HepG2 (cell line): ENCODE measurements at regions of chr15 and their contacts with region 1.

Region 1: GRCh38 chr15:94670438-94671034 is 439.2 kb downstream of the MCTP2 start:
- DNase-seq: peak; percentile 39
- ATAC-seq: no peak
- H3K4me3 ChIP-seq: no peak overlapping the region
- H3K27ac ChIP-seq: no peak overlapping the region
- H3K4me1 ChIP-seq: no peaks in the 10 kb centered on the region
- H3K27me3 ChIP-seq: peaks cover 0 to 4% of the 10 kb centered on the region in 2 experiments; a peak in 2 of 5 replicates
- CTCF ChIP-seq: peak; percentile 69
- EP300 ChIP-seq: no peak
- POLR2A ChIP-seq: no peak
- RAD21 ChIP-seq: 0 out of 2 replicates have a peak, but pooled peaks have one; percentile 15

Region 2: DNA sequence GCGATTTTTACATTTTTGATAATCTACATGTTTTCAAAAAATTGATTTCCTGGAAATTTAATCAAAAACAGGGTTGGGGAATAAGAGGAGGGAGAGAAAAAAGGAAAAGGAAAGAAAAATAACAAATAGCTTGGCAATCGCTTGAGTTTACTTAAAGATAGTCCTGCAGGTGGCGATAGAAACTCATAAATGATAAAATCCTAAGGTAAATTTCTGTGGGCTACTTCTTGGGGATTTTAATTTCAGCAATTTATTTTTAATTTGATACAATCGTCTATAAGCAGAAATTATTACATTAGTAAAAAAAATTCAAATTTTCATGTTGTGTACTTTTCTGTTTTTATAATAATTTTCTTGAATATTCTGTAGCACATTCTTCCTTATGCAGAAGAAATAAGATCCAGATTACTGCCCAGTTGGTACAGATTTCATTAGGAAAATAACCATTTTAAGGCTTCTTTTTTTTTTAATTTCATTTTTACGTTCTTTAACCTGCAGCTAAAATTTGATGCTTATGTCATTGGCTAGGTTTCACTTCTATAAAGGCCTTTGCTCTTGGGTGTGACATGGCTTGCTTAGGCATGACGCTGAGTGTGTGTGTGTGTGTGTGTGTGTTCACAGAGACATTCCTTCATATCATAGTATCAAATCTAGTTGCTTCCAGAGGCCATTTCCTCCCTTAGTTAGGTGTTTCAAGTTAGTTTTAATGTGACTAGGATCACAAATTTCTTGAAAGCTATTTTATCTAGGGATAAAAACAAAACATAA is 257.4 kb before region 1 on chr15:
- CTCF ChIA-PET with region 1: no interaction called
- POLR2A ChIA-PET with region 1: no interaction called
- in situ Hi-C with region 1: no loop called
- intact Hi-C with region 1: loop called (anchors 5 kb)
- DNase-seq: peak; percentile 22
- ATAC-seq: no peak
- H3K4me3 ChIP-seq: no peak overlapping the region
- H3K27ac ChIP-seq: no peak overlapping the region
- H3K4me1 ChIP-seq: no peaks in the 10 kb centered on the region
- H3K27me3 ChIP-seq: no peaks in the 10 kb centered on the region
- CTCF ChIP-seq: peak; percentile 31; the same call in 1 of the 2 replicates
- EP300 ChIP-seq: no peak
- POLR2A ChIP-seq: no peak
- RAD21 ChIP-seq: no peak

Region 3: GRCh38 chr15:94722024-94722636 is 51.6 kb after region 1 on chr15:
- CTCF ChIA-PET with region 1: no interaction called
- POLR2A ChIA-PET with region 1: no interaction called
- in situ Hi-C with region 1: no loop called
- intact Hi-C with region 1: no loop called
- DNase-seq: no peak
- ATAC-seq: no peak
- H3K4me3 ChIP-seq: no peak overlapping the region
- H3K27ac ChIP-seq: no peak overlapping the region
- H3K4me1 ChIP-seq: no peaks in the 10 kb centered on the region
- H3K27me3 ChIP-seq: no peaks in the 10 kb centered on the region
- CTCF ChIP-seq: no peak
- EP300 ChIP-seq: no peak
- POLR2A ChIP-seq: no peak
- RAD21 ChIP-seq: no peak

Region 4: GRCh38 chr15:94951538-94951937 is 281.0 kb after region 1 on chr15:
- CTCF ChIA-PET with region 1: no interaction called
- POLR2A ChIA-PET with region 1: no interaction called
- in situ Hi-C with region 1: no loop called
- intact Hi-C with region 1: no loop called
- DNase-seq: no peak
- ATAC-seq: no peak
- H3K4me3 ChIP-seq: no peak overlapping the region
- H3K27ac ChIP-seq: no peak overlapping the region
- H3K4me1 ChIP-seq: no peaks in the 10 kb centered on the region
- H3K27me3 ChIP-seq: no peaks in the 10 kb centered on the region
- CTCF ChIP-seq: no peak
- EP300 ChIP-seq: no peak
- POLR2A ChIP-seq: no peak
- RAD21 ChIP-seq: no peak

Region 5: DNA sequence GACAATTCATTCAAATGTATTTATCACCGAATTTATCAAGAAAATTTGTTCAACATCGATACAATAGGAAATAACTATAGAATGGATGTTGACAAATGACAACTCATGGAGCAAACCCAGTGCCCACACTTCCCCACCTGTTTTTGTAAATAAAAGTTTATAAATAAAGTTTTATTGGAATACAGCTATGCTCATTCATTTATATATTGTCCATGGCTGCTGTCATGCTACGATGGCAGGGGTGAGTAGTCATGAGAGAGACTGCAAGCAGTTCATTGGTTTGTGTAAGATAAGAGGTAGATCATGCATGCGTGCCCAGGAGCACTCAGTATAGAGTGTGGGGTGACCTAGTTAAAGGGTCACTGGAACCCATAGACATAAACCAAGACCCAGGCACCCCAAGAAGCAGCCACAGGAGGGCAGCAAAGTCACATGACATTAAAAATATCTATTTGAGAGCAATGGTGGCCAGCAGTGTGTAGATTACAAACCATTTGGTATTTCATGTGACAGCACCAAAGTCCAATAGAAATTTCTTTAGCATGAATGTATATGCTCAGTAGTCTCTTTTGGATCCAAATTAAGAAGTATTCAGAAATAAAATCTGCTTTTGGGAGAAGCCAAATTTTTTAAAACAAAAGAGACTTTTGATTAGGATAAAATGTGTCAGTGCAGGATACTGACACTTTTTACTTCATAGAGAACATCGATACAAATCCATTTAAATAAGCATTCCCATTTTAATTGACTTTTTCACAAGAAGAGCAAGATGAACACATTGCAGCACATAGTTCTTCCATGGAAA is 355.6 kb after region 1 on chr15:
- CTCF ChIA-PET with region 1: no interaction called
- POLR2A ChIA-PET with region 1: no interaction called
- in situ Hi-C with region 1: no loop called
- intact Hi-C with region 1: loop called (anchors 5 kb)
- DNase-seq: no peak
- ATAC-seq: peak; percentile 35; the same call in 2 of the 3 replicates
- H3K4me3 ChIP-seq: no peak overlapping the region
- H3K27ac ChIP-seq: no peak overlapping the region
- H3K4me1 ChIP-seq: no peaks in the 10 kb centered on the region
- H3K27me3 ChIP-seq: no peaks in the 10 kb centered on the region
- CTCF ChIP-seq: 0 out of 2 replicates have a peak, but pooled peaks have one; percentile 11
- EP300 ChIP-seq: no peak
- POLR2A ChIP-seq: no peak
- RAD21 ChIP-seq: no peak

Region 6: DNA sequence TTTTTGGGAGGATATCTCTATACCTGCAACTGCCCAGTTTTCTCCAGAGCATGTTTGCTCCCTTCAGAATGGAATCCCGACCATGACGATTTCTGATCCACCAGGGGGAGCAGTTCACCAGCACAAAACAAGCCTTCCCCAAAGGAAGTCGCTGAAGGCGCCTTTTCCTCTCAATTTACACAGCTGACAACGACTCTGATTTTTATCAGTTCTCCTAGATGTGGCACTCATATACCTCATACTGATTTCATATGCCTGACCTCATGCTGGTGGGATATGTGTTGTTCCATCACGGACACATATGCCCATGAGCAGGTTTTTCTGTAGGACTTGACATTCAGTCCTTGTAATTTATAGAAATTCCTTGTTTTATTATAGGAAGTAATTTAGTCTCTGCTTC is 589.0 kb after region 1 on chr15:
- CTCF ChIA-PET with region 1: no interaction called
- POLR2A ChIA-PET with region 1: no interaction called
- in situ Hi-C with region 1: no loop called
- intact Hi-C with region 1: loop called (anchors 1 kb)
- DNase-seq: peak; percentile 35
- ATAC-seq: peak; percentile 82
- H3K4me3 ChIP-seq: no peak overlapping the region
- H3K27ac ChIP-seq: no peak overlapping the region
- H3K4me1 ChIP-seq: no peaks in the 10 kb centered on the region
- H3K27me3 ChIP-seq: no peaks in the 10 kb centered on the region; a peak in 1 of 5 replicates
- CTCF ChIP-seq: peak; percentile 78
- EP300 ChIP-seq: no peak
- POLR2A ChIP-seq: no peak
- RAD21 ChIP-seq: 0 out of 2 replicates have a peak, but pooled peaks have one; percentile 21

Region 7: DNA sequence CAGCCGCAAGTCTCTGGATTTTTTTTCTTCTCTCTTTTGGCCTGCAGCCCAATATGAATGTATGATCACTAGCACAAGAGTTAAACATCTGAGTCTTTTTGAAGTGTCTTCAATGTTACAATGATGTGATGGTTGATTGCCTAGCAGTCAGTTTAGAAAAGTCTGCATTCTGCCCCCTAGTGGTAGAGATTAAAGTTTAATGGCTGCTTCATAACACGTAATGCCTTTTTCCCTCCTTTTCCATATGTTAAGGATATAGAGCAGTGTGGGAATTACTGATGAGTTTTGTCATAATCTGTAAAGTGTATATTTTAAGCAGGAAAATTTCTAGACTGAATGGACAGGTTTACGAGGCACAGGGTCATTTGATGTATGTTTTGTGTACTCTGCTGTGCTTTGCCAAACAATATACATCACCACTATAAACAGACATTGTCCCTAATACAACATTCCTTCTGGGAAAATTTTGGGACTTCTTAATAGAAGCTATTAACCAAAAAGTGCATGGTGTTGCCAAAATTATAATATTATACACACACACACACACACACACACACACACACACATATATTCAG is 621.4 kb after region 1 on chr15:
- CTCF ChIA-PET with region 1: interaction called, 28 read pairs
- POLR2A ChIA-PET with region 1: no interaction called
- in situ Hi-C with region 1: loop called (anchors 5 kb)
- intact Hi-C with region 1: loop called (anchors 1 kb)
- DNase-seq: peak; percentile 28
- ATAC-seq: peak; percentile 65
- H3K4me3 ChIP-seq: no peak overlapping the region
- H3K27ac ChIP-seq: no peak overlapping the region
- H3K4me1 ChIP-seq: no peaks in the 10 kb centered on the region
- H3K27me3 ChIP-seq: no peaks in the 10 kb centered on the region; a peak in 1 of 5 replicates
- CTCF ChIP-seq: peak; percentile 57
- EP300 ChIP-seq: no peak
- POLR2A ChIP-seq: no peak
- RAD21 ChIP-seq: 0 out of 2 replicates have a peak, but pooled peaks have one; percentile 11

Region 8: DNA sequence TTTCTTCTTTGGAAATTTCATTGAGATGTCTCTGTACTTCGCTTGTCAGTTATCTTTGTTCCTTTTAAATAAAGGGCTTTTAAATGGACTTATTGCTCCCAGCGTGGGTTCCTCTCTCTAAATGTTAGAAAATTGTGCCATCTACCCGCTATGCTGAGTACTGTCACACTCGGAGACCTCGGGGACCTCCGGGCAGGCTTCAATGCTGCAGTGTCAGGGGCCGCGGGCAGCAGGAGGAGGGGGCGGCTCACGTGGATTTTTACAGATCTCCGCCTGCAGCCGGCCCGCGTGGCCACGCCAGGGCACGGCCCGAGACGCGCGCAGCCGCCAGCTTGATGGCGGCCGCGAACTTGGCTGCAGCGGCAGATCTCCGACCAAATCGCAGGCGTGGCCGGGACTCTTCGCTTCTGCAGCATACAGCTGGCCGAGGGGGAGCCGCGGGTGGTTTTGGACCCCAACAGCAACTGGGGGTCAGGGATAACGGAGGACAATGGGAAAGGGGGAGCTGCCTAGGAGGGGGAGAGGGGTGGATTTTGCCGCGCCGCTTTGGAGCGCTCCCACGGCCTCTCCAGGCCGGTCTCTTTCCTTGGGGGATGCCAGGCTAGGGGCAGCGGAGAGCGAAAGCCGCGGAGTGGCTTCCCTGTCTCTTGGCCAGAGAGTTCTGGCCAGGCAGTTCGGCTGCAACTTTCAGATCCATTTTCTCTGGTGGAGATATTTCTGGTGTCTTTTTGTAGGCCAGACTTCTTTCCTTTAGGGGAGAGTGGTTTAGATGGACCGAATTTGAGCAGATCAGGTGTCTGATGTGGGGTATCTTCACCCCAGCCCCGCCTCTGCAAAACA is 1675.2 kb after region 1 on chr15:
- CTCF ChIA-PET with region 1: no interaction called
- POLR2A ChIA-PET with region 1: no interaction called
- in situ Hi-C with region 1: loop called (anchors 10 kb)
- intact Hi-C with region 1: no loop called
- DNase-seq: peak; percentile 47
- ATAC-seq: peak; percentile 82
- H3K4me3 ChIP-seq: no peak overlapping the region
- H3K27ac ChIP-seq: no peak overlapping the region
- H3K4me1 ChIP-seq: peaks cover 14% of the 10 kb centered on the region; the same call in 1 of the 2 replicates
- H3K27me3 ChIP-seq: no peaks in the 10 kb centered on the region
- CTCF ChIP-seq: peak; percentile 48
- EP300 ChIP-seq: no peak
- POLR2A ChIP-seq: no peak
- RAD21 ChIP-seq: peak; percentile 55; the same call in 1 of the 2 replicates